Endothelial cell of umbilical vein (primary cell): ENCODE measurements at regions of chr4 and their contacts with region 1.

Region 1: DNA sequence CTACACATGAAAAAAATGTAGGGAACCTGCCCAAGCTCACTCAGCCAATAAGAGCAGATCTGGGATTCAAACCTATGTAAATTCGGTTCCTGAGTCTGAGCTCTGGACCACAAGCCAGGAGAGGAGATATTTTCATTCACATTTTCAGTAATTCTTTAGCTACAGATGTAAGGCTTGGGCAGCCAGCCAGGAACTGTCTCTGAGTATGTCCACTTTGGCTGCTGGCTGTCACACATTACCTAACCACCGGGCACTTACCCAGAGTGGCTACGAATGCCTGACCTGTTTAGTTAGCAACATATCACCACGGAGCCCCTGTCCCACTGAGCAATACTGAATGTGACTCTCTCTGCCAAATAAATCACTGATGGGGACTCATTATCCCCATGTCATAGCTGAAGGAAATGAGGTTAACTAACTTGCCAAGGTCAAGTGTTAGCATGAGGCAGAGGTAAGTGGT is 15.3 kb downstream of the USP46 start:
- DNase-seq: peak; percentile 44
- H3K4me3 ChIP-seq: no peak overlapping the region
- H3K27ac ChIP-seq: no peak overlapping the region
- H3K4me1 ChIP-seq: peaks cover 33% of the 10 kb centered on the region
- H3K27me3 ChIP-seq: no peaks in the 10 kb centered on the region
- CTCF ChIP-seq: no peak
- POLR2A ChIP-seq: no peak

Region 2: GRCh38 chr4:52684896-52685295 is 41.1 kb after region 1 on chr4:
- CTCF ChIA-PET with region 1: no interaction called
- POLR2A ChIA-PET with region 1: no interaction called
- dilution Hi-C with region 1: no loop called
- intact Hi-C with region 1: no loop called
- DNase-seq: no peak
- H3K4me3 ChIP-seq: no peak overlapping the region
- H3K27ac ChIP-seq: no peak overlapping the region
- H3K4me1 ChIP-seq: no peaks in the 10 kb centered on the region
- H3K27me3 ChIP-seq: peaks cover 2 to 9% of the 10 kb centered on the region in 2 experiments
- CTCF ChIP-seq: no peak
- POLR2A ChIP-seq: no peak

Region 3: DNA sequence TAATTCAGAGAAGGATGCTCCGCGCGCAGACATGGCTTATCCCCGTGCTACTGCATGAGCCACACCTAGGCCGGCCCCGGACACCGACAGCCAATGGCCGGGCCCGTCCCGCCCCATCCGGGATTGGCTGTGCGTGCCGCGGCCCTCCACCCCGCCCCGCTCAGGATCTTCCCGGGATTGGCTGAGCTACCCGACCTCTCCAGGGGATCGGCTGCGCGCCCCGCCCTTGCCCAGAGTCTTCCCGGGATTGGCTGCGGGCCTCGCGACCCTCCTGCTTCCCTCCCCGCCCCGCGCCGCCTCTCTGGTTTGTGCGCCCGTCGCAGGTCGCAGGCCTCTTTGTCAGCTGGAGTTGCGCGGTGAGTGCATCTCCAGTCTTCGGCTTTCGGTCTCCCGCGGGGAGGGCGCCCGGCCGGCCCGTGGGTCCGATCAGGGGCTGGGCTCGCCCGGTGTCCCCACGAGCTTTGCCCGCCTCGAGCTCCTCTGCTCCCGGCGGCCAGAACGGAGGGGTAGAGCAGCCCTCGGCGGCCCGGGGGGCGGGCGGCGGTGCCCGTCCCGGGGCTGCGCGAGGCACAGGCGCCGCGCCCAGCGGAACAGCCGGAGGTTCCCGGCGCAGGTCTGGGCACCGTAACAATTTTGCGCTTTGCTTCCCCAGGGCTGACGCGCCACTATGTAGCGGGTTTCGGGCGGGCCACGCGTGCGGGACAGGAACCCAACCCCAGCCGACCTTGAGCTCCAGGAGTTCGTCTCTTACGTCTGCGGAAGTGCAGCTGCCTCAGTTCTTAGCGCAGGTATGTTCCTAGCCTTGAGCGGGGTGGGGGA is 68.6 kb after region 1 on chr4:
- CTCF ChIA-PET with region 1: no interaction called
- POLR2A ChIA-PET with region 1: interaction called, 3 read pairs
- dilution Hi-C with region 1: no loop called
- intact Hi-C with region 1: loop called (anchors 5 kb)
- DNase-seq: peak; percentile 97
- H3K4me3 ChIP-seq: peak overlapping the region; percentile 61 to 86 (median 76)
- H3K27ac ChIP-seq: peak overlapping the region; percentile 73
- H3K4me1 ChIP-seq: peaks cover 30% of the 10 kb centered on the region
- H3K27me3 ChIP-seq: peaks cover 0 to 5% of the 10 kb centered on the region in 2 experiments
- CTCF ChIP-seq: no peak
- POLR2A ChIP-seq: peak; percentile 97

Region 4: DNA sequence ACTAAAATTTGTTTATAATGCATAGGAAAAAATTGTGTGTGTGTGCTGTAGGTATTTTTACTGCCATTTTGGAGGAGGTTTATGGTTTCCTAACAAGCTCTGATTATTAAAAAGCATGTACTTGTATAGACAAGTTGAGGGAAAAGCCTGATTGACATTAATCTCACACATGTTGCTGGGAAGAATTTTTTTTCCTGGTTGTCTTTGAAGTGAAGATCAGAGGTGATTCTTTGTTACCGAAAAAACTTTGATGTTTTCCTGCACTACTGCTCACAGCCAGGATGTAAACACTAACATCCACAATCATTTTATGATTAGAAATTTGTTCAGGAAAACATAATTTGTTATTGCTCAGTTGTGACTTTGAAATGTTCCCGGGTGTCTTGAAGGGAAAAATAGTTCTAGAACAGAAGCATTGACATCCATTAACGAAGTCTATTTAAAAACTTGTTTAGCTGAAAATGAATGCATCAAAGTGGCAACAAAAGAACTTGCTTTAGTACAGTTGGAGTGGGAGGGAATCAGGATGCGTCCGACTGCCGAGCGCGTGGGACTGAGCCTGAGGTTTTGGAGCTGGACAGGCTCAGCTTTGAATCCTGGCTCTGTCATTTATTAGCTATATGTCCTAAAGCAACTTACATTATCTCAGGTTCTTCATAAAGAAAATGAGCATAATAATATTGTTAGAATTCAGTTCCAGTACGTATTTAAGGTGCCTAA is 116.3 kb after region 1 on chr4:
- CTCF ChIA-PET with region 1: no interaction called
- POLR2A ChIA-PET with region 1: no interaction called
- dilution Hi-C with region 1: no loop called
- intact Hi-C with region 1: no loop called
- DNase-seq: no peak
- H3K4me3 ChIP-seq: no peak overlapping the region
- H3K27ac ChIP-seq: no peak overlapping the region
- H3K4me1 ChIP-seq: no peaks in the 10 kb centered on the region
- H3K27me3 ChIP-seq: peaks cover 3 to 6% of the 10 kb centered on the region in 2 experiments
- CTCF ChIP-seq: no peak
- POLR2A ChIP-seq: no peak

Region 5: DNA sequence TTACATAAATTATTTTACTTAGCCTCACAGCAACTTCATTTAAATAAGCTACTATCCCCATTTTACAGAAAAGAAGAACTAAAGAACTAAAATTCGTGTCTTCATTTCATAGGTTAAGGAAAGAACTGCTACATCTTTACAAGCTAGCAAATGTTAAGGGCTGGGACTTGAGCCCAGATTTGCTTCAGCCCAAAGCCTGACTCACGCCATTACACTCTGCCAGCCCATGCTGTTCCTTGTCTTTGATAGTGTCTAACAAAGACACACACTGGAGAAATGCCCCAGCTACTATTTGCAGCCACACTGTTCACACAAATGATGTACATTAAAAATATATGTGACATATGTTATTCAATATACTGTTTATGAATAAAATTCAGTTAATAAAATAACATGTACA is 136.4 kb after region 1 on chr4:
- CTCF ChIA-PET with region 1: no interaction called
- POLR2A ChIA-PET with region 1: no interaction called
- dilution Hi-C with region 1: no loop called
- intact Hi-C with region 1: no loop called
- DNase-seq: no peak
- H3K4me3 ChIP-seq: no peak overlapping the region
- H3K27ac ChIP-seq: no peak overlapping the region
- H3K4me1 ChIP-seq: no peaks in the 10 kb centered on the region
- H3K27me3 ChIP-seq: no peaks in the 10 kb centered on the region
- CTCF ChIP-seq: no peak
- POLR2A ChIP-seq: no peak

Region 6: GRCh38 chr4:52904421-52904820 is 260.6 kb after region 1 on chr4:
- CTCF ChIA-PET with region 1: no interaction called
- POLR2A ChIA-PET with region 1: no interaction called
- dilution Hi-C with region 1: no loop called
- intact Hi-C with region 1: no loop called
- DNase-seq: no peak
- H3K4me3 ChIP-seq: no peak overlapping the region
- H3K27ac ChIP-seq: no peak overlapping the region
- H3K4me1 ChIP-seq: no peaks in the 10 kb centered on the region
- H3K27me3 ChIP-seq: no peaks in the 10 kb centered on the region
- CTCF ChIP-seq: no peak
- POLR2A ChIP-seq: no peak